BJ (cell line): ENCODE measurements at regions of chr22 and their contacts with region 1.

Region 1: DNA sequence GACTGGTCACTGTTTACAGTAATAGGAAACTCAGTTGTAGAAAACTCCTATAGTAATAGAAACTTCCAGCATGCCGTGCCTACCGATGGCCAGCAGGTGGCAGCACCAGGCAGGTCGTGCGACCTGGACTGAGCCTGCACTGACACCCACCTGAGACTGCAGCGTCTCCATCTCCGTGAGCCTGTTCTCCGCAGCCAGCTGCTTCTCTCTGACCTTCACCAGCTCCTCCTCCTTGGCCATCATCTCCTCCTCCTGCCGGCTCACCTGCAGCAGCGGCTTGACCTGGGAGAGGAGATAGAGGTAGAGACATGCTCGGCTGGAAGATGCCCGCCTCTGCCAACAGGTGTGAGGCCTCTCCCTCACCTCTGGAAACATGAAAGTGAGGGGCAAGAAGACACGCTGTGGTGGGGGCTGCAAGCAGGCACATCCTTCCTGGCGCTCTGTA is 48.5 kb downstream of the APOL1 start:
- DNase-seq: no peak
- H3K4me3 ChIP-seq: no peak overlapping the region
- H3K27me3 ChIP-seq: no peaks in the 10 kb centered on the region
- CTCF ChIP-seq: peak; percentile 90

Region 2: GRCh38 chr22:36221799-36222751 is 79.3 kb before region 1 on chr22:
- CTCF ChIA-PET with region 1: no interaction called
- POLR2A ChIA-PET with region 1: no interaction called
- DNase-seq: no peak
- H3K4me3 ChIP-seq: no peak overlapping the region
- H3K27me3 ChIP-seq: peaks cover 16% of the 10 kb centered on the region
- CTCF ChIP-seq: peak; percentile 63

Region 3: GRCh38 chr22:36286471-36287224 is 14.8 kb before region 1 on chr22:
- CTCF ChIA-PET with region 1: interaction called, 23 read pairs
- POLR2A ChIA-PET with region 1: no interaction called
- DNase-seq: peak; percentile 16
- H3K4me3 ChIP-seq: no peak overlapping the region
- H3K27me3 ChIP-seq: no peaks in the 10 kb centered on the region
- CTCF ChIP-seq: peak; percentile 97

Region 4: DNA sequence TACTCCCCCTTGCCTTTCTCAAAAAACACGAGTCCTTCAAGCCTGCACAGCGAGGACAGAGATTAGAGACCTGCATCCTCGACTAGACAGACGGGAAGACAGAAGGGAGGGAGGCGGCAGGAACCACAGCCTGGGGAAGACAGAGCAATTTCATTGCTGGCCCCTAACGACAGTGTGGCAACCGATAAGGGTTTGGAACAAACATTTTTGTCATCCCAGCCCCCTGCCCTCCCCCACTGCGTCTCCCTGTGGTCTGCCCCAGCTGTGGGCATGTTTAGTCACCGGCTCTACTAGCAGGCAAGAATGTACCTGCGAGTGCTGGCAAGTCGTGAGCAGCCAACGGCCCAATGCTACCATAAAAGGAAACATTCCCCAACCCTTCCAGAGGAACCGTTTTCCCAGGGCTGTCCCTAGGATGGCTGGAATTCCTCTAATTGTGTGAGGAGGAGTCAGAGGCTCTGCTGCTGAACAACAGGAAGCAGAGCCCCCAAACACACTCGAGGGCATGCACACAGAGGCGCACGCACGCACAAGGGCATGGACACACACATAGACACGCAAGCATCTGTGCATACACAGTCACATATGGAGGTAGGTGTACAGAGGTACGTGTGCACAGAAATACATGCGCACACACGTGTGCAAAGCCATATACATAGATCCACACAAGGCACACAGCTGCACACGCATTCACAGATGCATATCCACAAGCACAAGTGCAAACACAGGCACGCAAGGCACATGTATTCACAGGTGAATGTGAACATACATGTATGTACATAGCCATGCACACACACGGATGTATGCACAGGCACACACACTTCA is 28.1 kb after region 1 on chr22:
- CTCF ChIA-PET with region 1: interaction called, 24 read pairs
- POLR2A ChIA-PET with region 1: no interaction called
- DNase-seq: peak; percentile 91
- H3K4me3 ChIP-seq: no peak overlapping the region
- H3K27me3 ChIP-seq: no peaks in the 10 kb centered on the region
- CTCF ChIP-seq: no peak

Region 5: GRCh38 chr22:36470162-36470993 is 169.0 kb after region 1 on chr22:
- CTCF ChIA-PET with region 1: interaction called, 44 read pairs
- POLR2A ChIA-PET with region 1: no interaction called
- DNase-seq: no peak
- H3K4me3 ChIP-seq: no peak overlapping the region
- H3K27me3 ChIP-seq: no peaks in the 10 kb centered on the region
- CTCF ChIP-seq: peak; percentile 99

Region 6: GRCh38 chr22:36486619-36487384 is 185.4 kb after region 1 on chr22:
- CTCF ChIA-PET with region 1: interaction called, 15 read pairs
- POLR2A ChIA-PET with region 1: no interaction called
- DNase-seq: no peak
- H3K4me3 ChIP-seq: no peak overlapping the region
- H3K27me3 ChIP-seq: no peaks in the 10 kb centered on the region
- CTCF ChIP-seq: peak; percentile 71